Vagina (tissue), 2 donors: ENCODE measurements at regions of chr15 and their contacts with region 1.

Region 1: GRCh38 chr15:78618490-78618934 is 2.3 kb downstream of the CHRNA3 start:
- DNase-seq: no peak
- H3K4me3 ChIP-seq: no peak overlapping the region
- H3K27ac ChIP-seq: no peak overlapping the region
- H3K4me1 ChIP-seq: peaks cover 20% of the 10 kb centered on the region
- H3K27me3 ChIP-seq: peaks cover 13% of the 10 kb centered on the region
- CTCF ChIP-seq: peak; percentile 81 to 89 (median 86)
- POLR2A ChIP-seq: no peak

Region 2: DNA sequence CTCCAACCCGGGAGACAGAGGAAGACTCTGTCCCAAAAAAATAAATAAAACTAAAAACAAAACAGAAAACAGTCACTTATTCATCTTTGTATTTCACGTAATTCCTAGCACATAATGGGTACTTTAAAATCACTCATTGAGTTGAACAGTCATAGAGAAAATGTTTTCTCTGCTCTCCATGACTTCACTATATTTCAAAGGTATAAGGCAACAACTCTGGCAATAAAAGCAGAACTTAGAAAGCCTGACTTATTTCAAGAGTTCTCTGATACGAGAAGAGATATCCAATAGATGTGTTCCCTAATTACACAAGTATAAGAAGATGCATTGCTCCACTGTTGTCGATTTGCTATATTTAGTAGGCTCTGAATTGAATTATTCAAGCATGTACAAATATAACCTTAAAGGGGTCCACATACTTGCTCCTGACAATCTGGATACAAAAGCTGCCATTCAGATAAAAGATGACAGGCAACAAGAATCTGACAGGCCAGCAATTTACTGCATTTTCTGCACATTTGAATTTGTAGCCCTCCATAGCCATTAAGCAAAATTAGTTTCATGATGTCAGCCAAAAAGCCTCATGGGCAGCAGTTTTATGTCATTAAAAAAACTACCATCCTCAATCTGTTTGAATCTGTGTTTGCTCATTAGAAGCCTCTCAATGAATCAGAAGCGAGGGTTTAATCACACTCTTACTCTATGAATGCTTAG is 1246.5 kb before region 1 on chr15:
- intact Hi-C with region 1: no loop called
- DNase-seq: no peak
- H3K4me3 ChIP-seq: no peak overlapping the region
- H3K27ac ChIP-seq: no peak overlapping the region
- H3K4me1 ChIP-seq: peaks cover 16% of the 10 kb centered on the region
- H3K27me3 ChIP-seq: no peaks in the 10 kb centered on the region
- CTCF ChIP-seq: no peak
- POLR2A ChIP-seq: no peak

Region 3: DNA sequence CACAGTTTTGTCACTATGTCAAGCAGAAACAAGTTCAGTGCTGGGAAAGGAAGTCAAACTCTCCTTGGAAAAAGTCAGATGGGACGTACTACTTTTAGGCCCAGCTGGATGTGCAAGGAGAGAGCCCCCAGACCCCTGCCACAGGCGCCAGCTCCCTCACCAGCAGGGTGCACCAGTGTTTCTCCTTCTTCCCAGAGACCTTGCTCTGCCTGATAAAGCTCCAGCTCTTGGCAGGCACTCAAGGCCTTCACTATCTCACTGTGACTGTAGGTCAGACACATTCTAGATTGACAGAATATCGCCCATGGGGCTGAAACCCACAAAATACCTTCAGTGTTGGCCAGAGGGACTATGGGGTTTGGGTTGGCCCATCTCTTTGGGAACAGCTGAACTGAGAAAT is 77.3 kb after region 1 on chr15:
- intact Hi-C with region 1: no loop called
- DNase-seq: peak in 1 of 2 donors; percentile 72
- H3K4me3 ChIP-seq: no peak overlapping the region
- H3K27ac ChIP-seq: no peak overlapping the region
- H3K4me1 ChIP-seq: no peaks in the 10 kb centered on the region
- H3K27me3 ChIP-seq: no peaks in the 10 kb centered on the region
- CTCF ChIP-seq: no peak
- POLR2A ChIP-seq: no peak

Region 4: DNA sequence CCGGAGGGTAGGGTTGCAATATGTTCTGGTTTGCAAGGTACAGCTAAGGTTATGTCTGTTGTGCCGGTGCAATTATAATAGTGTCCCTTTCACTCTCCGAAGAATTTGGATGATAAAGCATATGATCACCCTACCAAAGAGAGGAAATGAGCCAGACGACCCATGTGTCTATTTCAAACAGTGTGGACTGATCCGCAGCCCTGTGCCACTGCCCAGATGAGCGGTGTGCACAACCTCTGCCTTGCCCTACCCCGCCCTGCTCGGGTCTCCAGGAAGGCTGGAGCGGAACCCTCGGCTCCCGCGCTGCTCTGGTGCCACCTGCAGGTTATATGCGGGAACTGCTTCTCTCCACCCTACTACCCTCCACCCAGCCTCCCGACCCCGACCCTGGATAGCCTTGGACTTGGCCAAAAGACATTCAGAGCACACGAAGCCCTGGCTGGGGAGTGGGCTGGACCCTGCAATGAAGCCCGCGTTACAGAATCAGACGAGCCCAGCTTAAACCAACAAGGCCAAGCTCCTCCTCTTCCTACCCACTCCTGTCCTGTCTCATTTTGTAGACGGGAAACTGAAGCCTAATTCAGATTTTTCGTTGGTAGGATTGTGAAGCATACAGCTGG is 90.9 kb after region 1 on chr15:
- intact Hi-C with region 1: loop called (anchors 5 kb)
- DNase-seq: peak in 1 of 2 donors; percentile 64
- H3K4me3 ChIP-seq: no peak overlapping the region
- H3K27ac ChIP-seq: no peak overlapping the region
- H3K4me1 ChIP-seq: no peaks in the 10 kb centered on the region
- H3K27me3 ChIP-seq: no peaks in the 10 kb centered on the region
- CTCF ChIP-seq: peak; percentile 70 to 78 (median 77)
- POLR2A ChIP-seq: no peak

Region 5: DNA sequence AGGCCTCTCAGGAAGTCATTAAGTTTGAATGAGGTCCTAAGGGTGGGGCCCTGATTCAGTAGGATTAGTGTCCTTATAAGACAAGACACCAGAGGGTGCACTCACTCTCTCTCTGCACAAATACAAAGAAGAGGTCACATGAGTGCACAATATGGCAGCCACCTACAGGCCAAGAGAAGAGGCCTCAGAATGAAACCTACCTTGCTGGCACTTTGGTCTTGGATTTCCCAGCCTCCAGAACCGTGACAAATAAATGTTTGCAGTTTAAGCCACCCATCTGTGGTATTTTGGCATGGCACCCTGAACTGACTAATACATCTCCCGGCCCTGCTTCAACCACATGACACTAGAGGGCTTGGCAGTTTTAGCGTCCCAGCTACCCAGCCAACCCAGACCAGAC is 96.4 kb after region 1 on chr15:
- intact Hi-C with region 1: loop called (anchors 5 kb)
- DNase-seq: peak in 1 of 2 donors; percentile 28
- H3K4me3 ChIP-seq: no peak overlapping the region
- H3K27ac ChIP-seq: no peak overlapping the region
- H3K4me1 ChIP-seq: no peaks in the 10 kb centered on the region
- H3K27me3 ChIP-seq: no peaks in the 10 kb centered on the region
- CTCF ChIP-seq: no peak
- POLR2A ChIP-seq: no peak

Region 6: DNA sequence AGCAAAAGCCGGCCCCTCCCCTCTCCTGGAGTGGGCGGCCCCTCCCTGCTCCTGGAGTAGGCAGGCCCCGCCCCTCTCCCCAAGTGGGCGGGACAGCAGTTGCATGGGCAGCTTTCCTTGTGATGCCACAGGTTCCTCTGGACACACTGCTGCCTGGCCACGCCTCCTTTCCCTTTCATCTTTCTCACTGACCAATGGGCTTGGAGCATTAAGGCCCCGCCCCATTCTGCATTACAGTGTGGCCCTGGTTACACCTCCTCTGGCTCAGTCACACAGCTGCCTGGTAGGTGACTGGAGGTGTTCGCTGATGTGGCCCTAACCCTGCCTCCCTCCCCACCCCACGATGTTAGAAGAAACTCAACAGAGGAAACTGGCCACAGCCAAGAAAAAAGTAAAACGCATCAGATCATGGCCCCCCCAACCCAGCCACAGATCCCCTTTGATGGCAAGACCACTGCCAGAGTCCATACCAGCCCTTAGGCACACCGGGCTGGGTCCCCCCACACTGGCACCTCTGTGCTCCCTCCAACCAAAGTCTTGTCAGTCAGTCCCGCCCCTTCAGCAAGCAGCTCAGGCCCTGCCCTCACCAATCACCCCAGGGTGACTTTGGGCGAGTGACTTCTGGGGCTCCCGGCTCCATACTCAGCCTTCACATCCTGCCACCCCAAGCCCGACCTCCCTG is 108.5 kb after region 1 on chr15:
- intact Hi-C with region 1: no loop called
- DNase-seq: no peak
- H3K4me3 ChIP-seq: no peak overlapping the region
- H3K27ac ChIP-seq: no peak overlapping the region
- H3K4me1 ChIP-seq: no peaks in the 10 kb centered on the region
- H3K27me3 ChIP-seq: no peaks in the 10 kb centered on the region
- CTCF ChIP-seq: no peak
- POLR2A ChIP-seq: no peak